ENCODE measurements at regions of chr17 and their contacts with region 1.

Region 1: DNA sequence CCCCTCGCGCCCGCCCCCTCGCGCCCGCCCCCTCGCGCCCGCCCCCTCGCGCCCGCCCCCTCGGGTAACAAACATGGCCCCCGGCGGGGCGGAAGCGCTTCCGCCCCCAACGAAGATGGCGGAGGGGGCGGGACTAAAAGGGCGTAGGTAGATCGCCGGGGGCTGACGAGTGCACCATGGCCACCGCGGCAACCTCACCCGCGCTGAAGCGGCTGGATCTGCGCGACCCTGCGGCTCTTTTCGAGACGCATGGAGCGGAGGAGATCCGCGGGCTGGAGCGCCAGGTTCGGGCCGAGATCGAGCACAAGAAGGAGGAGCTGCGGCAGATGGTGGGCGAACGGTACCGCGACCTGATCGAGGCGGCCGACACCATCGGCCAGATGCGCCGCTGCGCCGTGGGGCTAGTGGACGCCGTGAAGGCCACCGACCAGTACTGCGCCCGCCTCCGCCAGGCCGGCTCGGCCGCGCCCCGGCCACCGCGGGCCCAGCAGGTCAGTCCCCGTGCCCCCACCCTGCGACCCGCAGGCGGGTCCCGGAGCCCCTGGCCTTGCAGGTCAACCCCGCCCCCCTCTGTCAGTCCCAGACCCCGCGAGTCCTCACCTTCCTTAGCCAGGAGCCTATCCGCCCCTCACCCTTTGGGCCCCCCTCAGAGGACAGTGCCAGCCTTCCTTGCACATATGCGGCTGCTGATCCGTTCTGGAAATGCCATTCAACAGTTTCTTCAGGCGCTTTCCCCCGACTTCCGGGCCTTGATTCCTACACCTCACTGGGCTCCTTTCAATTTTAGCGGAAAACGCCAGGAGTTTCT is at the start of gene COG1:
- DNase-seq: peak; percentile 81 to 83
- H3K4me3 ChIP-seq: peak within 1 kb of the TSS; percentile 95
- H3K4me3 Mint-ChIP-seq: peak within 1 kb of the TSS; percentile 100
- H3K27ac Mint-ChIP-seq: peak within 1 kb of the TSS; percentile 99
- H3K4me1 ChIP-seq: no peaks in the 10 kb centered on the region; the same call in 1 of the 2 replicates
- H3K4me1 Mint-ChIP-seq: no peaks in the 10 kb centered on the region
- H3K27me3 ChIP-seq: no peaks in the 10 kb centered on the region
- H3K27me3 Mint-ChIP-seq: no peaks in the 10 kb centered on the region
- CTCF ChIP-seq: peak in 1 of 2 experiments; percentile 4
- total RNA-seq, gene COG1: 36.8 and 37.3 TPM in 2 replicates

Region 2: DNA sequence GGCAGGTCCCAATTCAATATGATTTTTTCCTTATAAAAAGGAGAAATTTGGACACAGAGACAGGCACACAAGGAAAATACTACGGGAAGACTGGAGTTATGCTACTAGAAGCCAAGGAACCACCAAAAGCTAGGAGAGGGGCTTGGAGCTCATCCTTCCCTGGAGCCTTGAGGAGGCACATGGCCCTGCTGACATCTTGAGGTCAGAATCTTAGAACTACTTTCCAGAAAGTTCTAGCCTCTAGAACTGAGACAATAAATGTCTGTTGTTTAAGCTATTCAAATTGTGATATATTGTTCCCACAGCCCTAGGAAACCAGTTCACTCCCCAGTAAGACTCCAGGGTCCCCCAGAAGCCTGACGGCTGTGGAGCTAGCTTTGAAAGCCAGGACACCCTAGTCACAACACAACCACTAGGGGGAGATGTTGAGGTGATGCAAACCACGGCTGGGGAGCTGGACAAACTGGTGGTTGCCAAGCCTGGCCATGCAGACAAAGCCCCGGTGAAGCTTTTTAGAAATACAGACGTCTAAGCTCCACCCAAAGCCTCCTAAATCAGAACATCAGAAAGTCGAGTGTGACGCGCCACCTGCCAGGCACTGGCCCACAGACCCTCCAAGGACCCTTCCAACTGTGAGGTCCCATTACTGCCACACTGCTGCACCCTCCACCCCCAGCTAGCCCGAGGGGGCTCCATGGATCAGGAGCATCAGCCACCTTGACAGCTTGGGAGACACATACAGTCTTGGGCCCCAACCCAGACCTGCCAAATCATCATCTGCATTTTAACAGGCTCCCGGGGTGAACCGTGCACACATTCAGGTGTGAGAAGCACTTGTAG is 207.0 kb before region 1 on chr17:
- CTCF ChIA-PET with region 1: interaction called, 61 read pairs
- POLR2A ChIA-PET with region 1: no interaction called
- intact Hi-C with region 1: loop called (anchors 1 kb)
- DNase-seq: peak; percentile 74 to 86
- H3K4me3 ChIP-seq: no peak overlapping the region
- H3K4me3 Mint-ChIP-seq: no peak overlapping the region
- H3K27ac Mint-ChIP-seq: no peak overlapping the region
- H3K4me1 ChIP-seq: no peaks in the 10 kb centered on the region
- H3K4me1 Mint-ChIP-seq: no peaks in the 10 kb centered on the region
- H3K27me3 ChIP-seq: no peaks in the 10 kb centered on the region
- H3K27me3 Mint-ChIP-seq: no peaks in the 10 kb centered on the region
- CTCF ChIP-seq: peak; percentile 89 to 93

Region 3: GRCh38 chr17:73166731-73167581 is 26.1 kb before region 1 on chr17:
- CTCF ChIA-PET with region 1: interaction called, 6 read pairs
- POLR2A ChIA-PET with region 1: no interaction called
- intact Hi-C with region 1: loop called (anchors 2 kb)
- DNase-seq: no peak
- H3K4me3 ChIP-seq: no peak overlapping the region
- H3K4me3 Mint-ChIP-seq: peak overlapping the region; percentile 83
- H3K27ac Mint-ChIP-seq: no peak overlapping the region
- H3K4me1 ChIP-seq: peaks cover 6% of the 10 kb centered on the region; the same call in 1 of the 2 replicates
- H3K4me1 Mint-ChIP-seq: peaks cover 13% of the 10 kb centered on the region
- H3K27me3 ChIP-seq: peaks cover 8% of the 10 kb centered on the region
- H3K27me3 Mint-ChIP-seq: peaks cover 20% of the 10 kb centered on the region
- CTCF ChIP-seq: no peak

Region 4: DNA sequence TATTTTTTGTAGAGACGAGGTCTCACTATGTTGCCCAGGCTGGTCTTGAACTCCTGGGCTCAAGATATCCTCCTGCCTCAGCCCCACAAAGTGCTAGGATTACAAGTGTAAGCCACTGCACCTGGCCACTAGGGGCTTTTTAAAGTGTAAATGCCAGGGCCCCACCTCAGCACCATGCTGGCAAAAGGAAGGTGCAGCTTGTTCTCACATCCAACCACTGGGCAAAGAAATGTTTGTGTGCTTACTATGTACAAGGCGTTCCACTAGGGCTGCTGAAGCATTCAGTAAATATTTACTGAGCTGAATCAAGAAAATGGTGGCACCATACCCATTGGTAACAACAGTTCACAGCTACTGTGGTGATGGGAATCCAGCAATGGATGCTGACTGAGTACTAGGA is 22.3 kb after region 1 on chr17:
- CTCF ChIA-PET with region 1: no interaction called
- POLR2A ChIA-PET with region 1: no interaction called
- intact Hi-C with region 1: no loop called
- DNase-seq: no peak
- H3K4me3 ChIP-seq: no peak overlapping the region
- H3K4me3 Mint-ChIP-seq: no peak overlapping the region
- H3K27ac Mint-ChIP-seq: peak overlapping the region; percentile 27
- H3K4me1 ChIP-seq: no peaks in the 10 kb centered on the region
- H3K4me1 Mint-ChIP-seq: no peaks in the 10 kb centered on the region
- H3K27me3 ChIP-seq: no peaks in the 10 kb centered on the region
- H3K27me3 Mint-ChIP-seq: no peaks in the 10 kb centered on the region
- CTCF ChIP-seq: peak in 1 of 2 experiments; percentile 22

Region 5: DNA sequence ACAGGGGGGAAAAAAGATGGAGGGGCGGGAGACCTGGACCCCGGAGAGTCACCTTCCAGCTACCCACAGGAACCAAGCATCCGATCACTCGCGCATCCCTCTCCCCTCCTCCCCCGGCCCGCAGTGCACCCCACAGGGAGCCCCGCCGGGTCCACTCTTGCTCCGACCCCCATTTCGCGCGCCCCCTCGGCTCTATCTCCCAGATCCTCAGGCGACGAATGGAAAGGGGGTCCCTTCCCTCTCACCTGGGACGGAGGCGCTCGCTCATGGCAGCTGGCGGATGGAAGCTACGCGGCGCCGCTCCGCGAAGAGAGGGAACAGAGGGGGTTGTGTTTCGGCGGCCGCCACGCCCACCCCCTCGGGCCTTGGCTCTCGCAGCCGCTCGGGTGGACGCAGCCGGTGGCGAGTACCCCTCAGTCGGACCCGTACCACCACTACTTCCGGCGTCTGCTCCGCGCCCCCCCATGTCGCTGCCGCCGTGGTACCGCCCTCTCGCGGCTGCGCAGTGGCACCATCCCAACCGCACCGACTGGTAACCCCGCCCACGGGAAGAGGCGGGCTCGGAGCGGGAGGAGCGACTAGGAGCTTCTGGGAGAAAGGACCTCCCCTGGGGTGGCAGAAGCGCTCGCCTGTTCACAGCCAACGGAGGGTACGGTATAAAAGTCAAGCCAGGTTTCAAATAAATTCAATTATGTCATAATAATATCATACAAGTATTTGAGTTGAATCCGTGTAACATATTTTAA is 38.9 kb after region 1 on chr17:
- CTCF ChIA-PET with region 1: interaction called, 6 read pairs
- POLR2A ChIA-PET with region 1: no interaction called
- intact Hi-C with region 1: loop called (anchors 1 kb)
- DNase-seq: peak; percentile 96 to 98
- H3K4me3 ChIP-seq: peak overlapping the region; percentile 84
- H3K4me3 Mint-ChIP-seq: peak overlapping the region; percentile 92
- H3K27ac Mint-ChIP-seq: peak overlapping the region; percentile 98
- H3K4me1 ChIP-seq: peaks cover 23% of the 10 kb centered on the region
- H3K4me1 Mint-ChIP-seq: peaks cover 12% of the 10 kb centered on the region
- H3K27me3 ChIP-seq: no peaks in the 10 kb centered on the region
- H3K27me3 Mint-ChIP-seq: no peaks in the 10 kb centered on the region
- CTCF ChIP-seq: peak in 1 of 2 experiments; percentile 32